Heart right ventricle (tissue), 16 donors: ENCODE measurements at regions of chr15 and their contacts with region 1.

Region 1: GRCh38 chr15:45048794-45049631 is 26.0 kb downstream of the SORD start:
- DNase-seq: peak in 1 of 2 donors; percentile 7
- ATAC-seq: peak; percentile 58 to 88 (median 74)
- H3K4me3 ChIP-seq: no peak overlapping the region
- H3K27ac ChIP-seq: peak overlapping the region in 5 of 10 donors; percentile 4 to 87 (median 36)
- H3K4me1 ChIP-seq: peaks cover 0 to 14% (median 0%) of the 10 kb centered on the region in 9 donors
- H3K27me3 ChIP-seq: no peaks in the 10 kb centered on the region
- CTCF ChIP-seq: no peak

Region 2: GRCh38 chr15:44798826-44799225 is 250.2 kb before region 1 on chr15:
- intact Hi-C with region 1: no loop called
- DNase-seq: no peak
- ATAC-seq: no peak
- H3K4me3 ChIP-seq: no peak overlapping the region
- H3K27ac ChIP-seq: no peak overlapping the region
- H3K4me1 ChIP-seq: peaks cover 0 to 11% (median 0%) of the 10 kb centered on the region in 9 donors
- H3K27me3 ChIP-seq: no peaks in the 10 kb centered on the region
- CTCF ChIP-seq: peak in 2 of 9 donors; percentile 19 to 21

Region 3: DNA sequence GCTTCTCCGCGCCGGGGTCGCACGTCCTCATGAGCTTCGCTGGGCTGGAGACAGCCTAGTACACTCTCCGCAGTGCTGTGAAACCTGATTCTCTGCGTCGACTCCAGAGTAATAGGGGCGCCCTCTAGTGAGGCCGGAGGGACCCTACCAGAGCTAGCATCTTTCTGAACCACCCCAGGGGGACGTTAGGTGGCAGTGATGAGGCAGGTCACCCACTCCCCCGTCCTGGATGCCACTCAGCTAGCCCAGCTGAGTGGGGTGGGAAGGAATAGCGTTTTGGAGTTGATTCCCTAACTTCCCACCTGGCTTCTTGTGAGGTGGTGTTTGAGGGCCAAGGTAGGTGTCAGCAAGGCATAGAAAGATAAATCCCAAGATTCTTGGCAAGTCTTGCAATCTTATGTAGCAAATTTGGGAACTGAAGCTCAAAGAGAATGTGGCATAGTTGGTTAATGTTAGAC is 69.1 kb after region 1 on chr15:
- intact Hi-C with region 1: loop called in 1 of 10 experiments (anchors 10 kb)
- DNase-seq: peak; percentile 81 to 89
- ATAC-seq: peak; percentile 93 to 97 (median 96)
- H3K4me3 ChIP-seq: peak overlapping the region in 8 of 10 donors; percentile 16 to 44 (median 34)
- H3K27ac ChIP-seq: no peak overlapping the region
- H3K4me1 ChIP-seq: peaks cover 8 to 35% (median 15%) of the 10 kb centered on the region in 9 donors
- H3K27me3 ChIP-seq: peaks cover 22 to 94% (median 80%) of the 10 kb centered on the region in 7 donors
- CTCF ChIP-seq: peak; percentile 90 to 100 (median 99)